Common myeloid progenitor, CD34-positive (primary cell): ENCODE measurements at regions of chr5 and their contacts with region 1.

Region 1: GRCh38 chr5:145903113-145903512 is 30.3 kb upstream of the GRXCR2 start:
- DNase-seq: peak in 2 of 3 donors; percentile 20 to 36
- H3K4me3 ChIP-seq: no peak overlapping the region
- H3K27ac ChIP-seq: no peak overlapping the region
- H3K4me1 ChIP-seq: no peaks in the 10 kb centered on the region
- H3K27me3 ChIP-seq: no peaks in the 10 kb centered on the region

Region 2: DNA sequence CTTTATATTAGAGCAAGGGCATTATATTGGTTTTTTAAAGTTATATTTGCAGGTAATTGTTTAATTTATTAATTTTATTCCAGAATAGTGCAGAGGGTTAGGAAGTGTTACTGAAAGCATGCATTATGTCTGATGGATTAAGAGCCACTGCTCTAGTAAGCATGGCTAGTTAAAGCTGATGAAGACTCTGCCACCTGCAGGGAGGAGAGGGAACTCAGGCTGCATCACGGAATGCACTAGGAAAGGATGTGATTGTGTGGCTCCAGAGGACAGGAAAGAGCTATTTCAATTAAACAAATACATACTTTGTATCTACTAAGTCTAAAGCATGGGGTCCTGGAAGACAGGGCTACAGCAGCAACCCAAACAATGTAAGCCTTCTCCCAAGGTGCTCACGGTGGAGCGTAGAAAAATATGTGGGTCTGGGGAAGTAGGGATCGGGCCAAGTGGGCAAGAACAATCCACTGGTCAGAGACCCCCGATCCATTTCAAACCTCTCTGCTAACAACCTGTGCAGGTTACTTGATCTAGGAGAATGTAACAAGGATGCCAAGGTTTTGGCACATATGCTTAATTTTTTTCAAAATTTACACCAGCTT is 15.0 kb before region 1 on chr5:
- CTCF ChIA-PET with region 1: interaction called, 13 read pairs
- POLR2A ChIA-PET with region 1: no interaction called
- DNase-seq: peak; percentile 40 to 69 (median 62)
- H3K4me3 ChIP-seq: no peak overlapping the region
- H3K27ac ChIP-seq: no peak overlapping the region
- H3K4me1 ChIP-seq: no peaks in the 10 kb centered on the region
- H3K27me3 ChIP-seq: no peaks in the 10 kb centered on the region